Natural killer cell (primary cell): ENCODE measurements at regions of chr11 and their contacts with region 1.

Region 1: GRCh38 chr11:126440792-126441514 is 85.5 kb downstream of the ST3GAL4 start:
- DNase-seq: peak; percentile 72 to 81
- ATAC-seq: peak; percentile 73 to 93 (median 91)
- H3K4me3 ChIP-seq: no peak overlapping the region
- H3K4me3 Mint-ChIP-seq: no peak overlapping the region
- H3K27ac ChIP-seq: no peak overlapping the region
- H3K27ac Mint-ChIP-seq: no peak overlapping the region
- H3K4me1 ChIP-seq: peaks cover 6% of the 10 kb centered on the region
- H3K4me1 Mint-ChIP-seq: peaks cover 7 to 10% of the 10 kb centered on the region in 2 donors
- H3K27me3 ChIP-seq: no peaks in the 10 kb centered on the region
- H3K27me3 Mint-ChIP-seq: no peaks in the 10 kb centered on the region
- CTCF ChIP-seq: peak; percentile 99

Region 2: GRCh38 chr11:126480410-126481302 is 39.7 kb after region 1 on chr11:
- intact Hi-C with region 1: loop called (anchors 1 kb)
- DNase-seq: peak; percentile 62 to 88
- ATAC-seq: peak; percentile 91 to 99 (median 96)
- H3K4me3 ChIP-seq: no peak overlapping the region
- H3K4me3 Mint-ChIP-seq: peak overlapping the region; percentile 33
- H3K27ac ChIP-seq: peak overlapping the region; percentile 19
- H3K27ac Mint-ChIP-seq: peak overlapping the region; percentile 20 to 83
- H3K4me1 ChIP-seq: peaks cover 13% of the 10 kb centered on the region
- H3K4me1 Mint-ChIP-seq: peaks cover 11 to 18% of the 10 kb centered on the region in 2 donors
- H3K27me3 ChIP-seq: no peaks in the 10 kb centered on the region
- H3K27me3 Mint-ChIP-seq: peaks cover 0 to 3% of the 10 kb centered on the region in 2 donors
- CTCF ChIP-seq: peak; percentile 88

Region 3: DNA sequence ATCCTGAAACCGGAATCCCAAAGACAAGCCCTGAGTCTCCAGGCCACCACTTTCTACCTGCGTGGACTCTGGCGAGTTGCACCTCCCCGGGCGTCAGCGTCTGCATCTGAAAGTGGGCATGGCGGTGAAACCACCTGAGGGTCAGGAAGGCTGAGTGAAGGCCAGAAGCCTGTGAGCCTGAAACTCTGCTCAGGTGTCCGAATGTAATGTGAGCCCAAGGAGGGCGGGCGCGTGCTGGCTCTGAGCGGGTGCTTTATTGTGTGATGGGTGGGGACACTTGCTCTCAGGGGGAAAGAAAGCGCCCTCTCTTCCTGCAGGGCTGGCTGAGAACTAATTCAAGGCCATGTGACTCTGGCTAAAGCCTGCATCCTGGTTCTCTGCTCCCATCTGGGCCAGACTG is 50.1 kb after region 1 on chr11:
- intact Hi-C with region 1: no loop called
- DNase-seq: no peak
- ATAC-seq: no peak
- H3K4me3 ChIP-seq: no peak overlapping the region
- H3K4me3 Mint-ChIP-seq: no peak overlapping the region
- H3K27ac ChIP-seq: no peak overlapping the region
- H3K27ac Mint-ChIP-seq: no peak overlapping the region
- H3K4me1 ChIP-seq: no peaks in the 10 kb centered on the region
- H3K4me1 Mint-ChIP-seq: no peaks in the 10 kb centered on the region
- H3K27me3 ChIP-seq: no peaks in the 10 kb centered on the region
- H3K27me3 Mint-ChIP-seq: no peaks in the 10 kb centered on the region
- CTCF ChIP-seq: no peak

Region 4: GRCh38 chr11:126989942-126990715 is 549.2 kb after region 1 on chr11:
- intact Hi-C with region 1: loop called (anchors 1 kb)
- DNase-seq: peak; percentile 56 to 62
- ATAC-seq: peak; percentile 64 to 90 (median 69)
- H3K4me3 ChIP-seq: no peak overlapping the region
- H3K4me3 Mint-ChIP-seq: no peak overlapping the region
- H3K27ac ChIP-seq: no peak overlapping the region
- H3K27ac Mint-ChIP-seq: no peak overlapping the region
- H3K4me1 ChIP-seq: no peaks in the 10 kb centered on the region
- H3K4me1 Mint-ChIP-seq: peaks cover 0 to 5% of the 10 kb centered on the region in 2 donors
- H3K27me3 ChIP-seq: no peaks in the 10 kb centered on the region
- H3K27me3 Mint-ChIP-seq: peaks cover 19 to 46% of the 10 kb centered on the region in 2 donors
- CTCF ChIP-seq: peak; percentile 78

Region 5: DNA sequence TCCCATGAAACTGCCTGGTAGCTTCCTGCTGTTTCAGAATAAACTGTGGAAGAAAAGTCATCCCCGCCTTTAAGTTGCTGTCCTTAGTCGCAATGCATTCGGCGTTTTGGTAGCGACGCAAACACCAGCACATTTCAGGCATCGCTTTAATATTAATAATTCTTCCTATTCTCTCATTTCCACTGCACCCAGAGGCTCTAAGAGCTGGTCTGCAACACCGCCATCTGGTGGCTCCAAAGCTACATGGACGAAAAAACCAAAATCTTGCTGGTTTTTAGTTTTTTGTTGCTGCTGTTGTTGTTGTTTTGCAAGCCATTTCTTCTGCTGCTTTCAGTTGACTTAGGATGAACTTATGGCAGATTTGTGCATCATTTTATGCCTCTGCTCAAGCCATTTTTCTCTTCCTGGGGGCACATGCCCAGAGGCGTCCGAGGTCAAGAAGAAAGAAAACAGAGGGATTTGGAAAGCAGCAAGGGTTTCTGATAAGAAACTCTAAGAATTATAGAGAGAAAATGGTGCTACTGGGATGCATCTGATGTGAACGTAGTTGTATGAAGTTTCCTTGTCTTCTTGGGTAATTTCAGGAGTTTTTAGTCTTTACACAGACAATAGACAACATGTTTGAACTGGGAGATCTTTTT is 905.0 kb after region 1 on chr11:
- intact Hi-C with region 1: loop called (anchors 2 kb)
- DNase-seq: peak in 1 of 2 donors; percentile 43
- ATAC-seq: no peak
- H3K4me3 ChIP-seq: no peak overlapping the region
- H3K4me3 Mint-ChIP-seq: no peak overlapping the region
- H3K27ac ChIP-seq: no peak overlapping the region
- H3K27ac Mint-ChIP-seq: no peak overlapping the region
- H3K4me1 ChIP-seq: no peaks in the 10 kb centered on the region
- H3K4me1 Mint-ChIP-seq: no peaks in the 10 kb centered on the region
- H3K27me3 ChIP-seq: no peaks in the 10 kb centered on the region
- H3K27me3 Mint-ChIP-seq: peaks cover 3 to 22% of the 10 kb centered on the region in 2 donors
- CTCF ChIP-seq: peak; percentile 34

Region 6: GRCh38 chr11:127493330-127494022 is 1052.5 kb after region 1 on chr11:
- intact Hi-C with region 1: loop called (anchors 10 kb)
- DNase-seq: no peak
- ATAC-seq: no peak
- H3K4me3 ChIP-seq: no peak overlapping the region
- H3K4me3 Mint-ChIP-seq: no peak overlapping the region
- H3K27ac ChIP-seq: no peak overlapping the region
- H3K27ac Mint-ChIP-seq: no peak overlapping the region
- H3K4me1 ChIP-seq: no peaks in the 10 kb centered on the region
- H3K4me1 Mint-ChIP-seq: no peaks in the 10 kb centered on the region
- H3K27me3 ChIP-seq: no peaks in the 10 kb centered on the region
- H3K27me3 Mint-ChIP-seq: peaks cover 0 to 2% of the 10 kb centered on the region in 2 donors
- CTCF ChIP-seq: no peak